ENCODE measurements at regions of chr16 and their contacts with region 1.

Region 1: GRCh38 chr16:84504420-84505248 is at the start of gene MEAK7:
- DNase-seq: peak; percentile 98
- ATAC-seq: peak; percentile 94
- H3K4me3 Mint-ChIP-seq: peak within 1 kb of the TSS; percentile 82
- H3K27ac Mint-ChIP-seq: peak within 1 kb of the TSS; percentile 86
- H3K4me1 Mint-ChIP-seq: peaks cover 56% of the 10 kb centered on the region
- H3K27me3 Mint-ChIP-seq: no peaks in the 10 kb centered on the region
- total RNA-seq, gene MEAK7: 62.3 to 72.4 TPM

Region 2: DNA sequence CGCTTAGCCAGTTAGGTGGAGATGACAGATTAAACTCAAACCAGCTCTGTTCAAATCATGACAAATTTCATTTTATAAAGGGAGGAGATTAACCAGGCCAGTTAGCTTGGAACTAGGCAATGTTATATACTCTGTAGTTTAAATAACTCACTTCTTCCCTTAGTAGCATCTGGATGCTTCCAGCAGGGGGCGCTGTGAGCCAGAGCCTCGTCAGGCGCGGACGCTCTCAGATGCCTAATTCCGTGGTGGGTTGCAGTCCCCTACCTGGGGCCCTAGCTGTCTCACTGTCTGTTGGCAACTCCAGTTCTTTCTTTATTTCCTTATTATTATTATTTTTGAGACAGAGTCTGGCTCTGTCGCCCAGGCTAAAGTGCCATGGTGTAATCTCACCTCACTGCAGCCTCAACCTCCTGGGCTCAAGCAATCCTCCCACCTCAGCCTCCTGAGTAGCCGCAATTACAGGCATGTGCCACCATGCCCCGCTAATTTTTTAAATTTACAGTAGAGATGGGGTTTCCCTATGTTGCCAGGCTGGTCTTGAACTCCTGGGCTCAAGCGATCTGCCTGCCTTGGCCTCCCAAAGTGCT is 227.3 kb before region 1 on chr16:
- CTCF ChIA-PET with region 1: interaction called, 14 read pairs
- POLR2A ChIA-PET with region 1: no interaction called
- DNase-seq: peak; percentile 78
- ATAC-seq: peak; percentile 89
- H3K4me3 Mint-ChIP-seq: no peak overlapping the region
- H3K27ac Mint-ChIP-seq: no peak overlapping the region
- H3K4me1 Mint-ChIP-seq: no peaks in the 10 kb centered on the region
- H3K27me3 Mint-ChIP-seq: peaks cover 4% of the 10 kb centered on the region

Region 3: GRCh38 chr16:84449171-84450140 is 55.2 kb before region 1 on chr16:
- CTCF ChIA-PET with region 1: no interaction called
- POLR2A ChIA-PET with region 1: no interaction called
- DNase-seq: no peak
- ATAC-seq: no peak
- H3K4me3 Mint-ChIP-seq: no peak overlapping the region
- H3K27ac Mint-ChIP-seq: peak overlapping the region; percentile 51
- H3K4me1 Mint-ChIP-seq: no peaks in the 10 kb centered on the region
- H3K27me3 Mint-ChIP-seq: peaks cover 4% of the 10 kb centered on the region

Region 4: DNA sequence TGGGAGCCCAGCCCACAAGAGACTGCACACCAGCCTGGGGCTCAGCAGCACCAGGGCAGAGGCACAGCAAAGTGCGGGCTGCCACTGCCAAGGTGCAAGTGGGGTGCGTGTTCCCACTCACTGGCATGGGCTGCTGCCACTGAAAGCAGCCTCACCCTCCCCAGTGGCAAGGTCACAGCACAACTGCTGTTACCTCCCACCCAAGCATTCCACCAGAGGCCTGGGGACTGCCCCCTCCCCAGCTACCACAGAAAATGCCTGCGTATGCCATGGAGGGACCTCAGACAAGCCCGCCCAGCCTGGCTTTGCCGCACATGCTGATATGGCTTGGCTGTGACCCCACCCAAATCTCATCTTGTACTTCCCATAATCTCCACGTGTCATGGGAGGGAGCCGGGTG is 33.3 kb before region 1 on chr16:
- CTCF ChIA-PET with region 1: no interaction called
- POLR2A ChIA-PET with region 1: no interaction called
- DNase-seq: peak; percentile 13
- ATAC-seq: no peak
- H3K4me3 Mint-ChIP-seq: no peak overlapping the region
- H3K27ac Mint-ChIP-seq: no peak overlapping the region
- H3K4me1 Mint-ChIP-seq: peaks cover 3% of the 10 kb centered on the region
- H3K27me3 Mint-ChIP-seq: no peaks in the 10 kb centered on the region

Region 5: GRCh38 chr16:84518748-84519341 is 14.2 kb after region 1 on chr16:
- CTCF ChIA-PET with region 1: interaction called, 68 read pairs
- POLR2A ChIA-PET with region 1: interaction called, 4 read pairs
- DNase-seq: peak; percentile 94
- ATAC-seq: peak; percentile 60
- H3K4me3 Mint-ChIP-seq: peak overlapping the region; percentile 59
- H3K27ac Mint-ChIP-seq: peak overlapping the region; percentile 92
- H3K4me1 Mint-ChIP-seq: peaks cover 91% of the 10 kb centered on the region
- H3K27me3 Mint-ChIP-seq: no peaks in the 10 kb centered on the region

Region 6: DNA sequence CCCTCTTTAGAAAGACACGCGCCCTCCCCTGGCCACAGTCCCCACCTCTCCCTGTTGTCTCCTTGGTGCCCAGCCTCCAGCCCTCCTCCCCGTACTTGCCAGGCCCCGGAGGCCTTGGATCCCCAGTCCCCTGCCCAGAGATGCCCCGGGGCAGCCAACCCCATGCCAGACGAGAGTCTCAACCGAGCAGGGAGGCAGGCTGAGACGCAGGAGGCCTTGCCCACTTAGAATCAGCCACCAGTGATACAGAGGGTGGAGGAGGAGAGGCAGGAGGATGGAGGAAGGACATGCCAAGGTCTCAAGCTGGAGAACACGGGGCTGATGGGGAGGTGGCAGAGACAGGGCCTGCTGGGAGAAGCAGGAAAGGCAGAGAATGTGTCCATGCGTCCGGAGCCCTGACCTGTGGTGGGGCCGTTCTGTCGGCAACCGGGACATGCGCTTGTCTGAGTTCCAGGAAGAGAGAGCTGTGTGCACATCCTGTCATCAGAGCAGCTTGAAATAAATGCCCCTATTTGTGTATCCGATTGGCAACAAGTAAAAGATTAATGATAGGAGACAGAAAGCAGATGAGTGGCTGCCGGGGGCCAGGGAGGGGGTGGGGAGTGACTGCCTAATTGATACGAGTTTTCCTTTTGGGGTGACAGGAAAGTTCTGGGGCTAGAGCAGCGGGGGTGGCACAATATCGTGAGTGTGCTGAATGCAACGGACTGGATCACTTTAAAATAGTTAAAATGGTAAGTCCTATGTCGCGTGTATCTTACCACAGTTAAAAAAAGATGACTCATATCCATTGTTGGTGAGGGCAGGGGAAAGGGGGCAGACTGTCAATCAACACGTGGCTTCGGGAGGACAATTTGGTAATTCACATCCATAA is 44.6 kb after region 1 on chr16:
- CTCF ChIA-PET with region 1: interaction called, 172 read pairs
- POLR2A ChIA-PET with region 1: interaction called, 9 read pairs
- DNase-seq: peak; percentile 75
- ATAC-seq: peak; percentile 54
- H3K4me3 Mint-ChIP-seq: peak overlapping the region; percentile 86
- H3K27ac Mint-ChIP-seq: peak overlapping the region; percentile 98
- H3K4me1 Mint-ChIP-seq: peaks cover 52% of the 10 kb centered on the region
- H3K27me3 Mint-ChIP-seq: no peaks in the 10 kb centered on the region

Region 7: GRCh38 chr16:84562174-84562815 is 57.7 kb after region 1 on chr16:
- CTCF ChIA-PET with region 1: interaction called, 10 read pairs
- POLR2A ChIA-PET with region 1: no interaction called
- DNase-seq: no peak
- ATAC-seq: no peak
- H3K4me3 Mint-ChIP-seq: no peak overlapping the region
- H3K27ac Mint-ChIP-seq: no peak overlapping the region
- H3K4me1 Mint-ChIP-seq: peaks cover 15% of the 10 kb centered on the region
- H3K27me3 Mint-ChIP-seq: no peaks in the 10 kb centered on the region

Region 8: GRCh38 chr16:84599521-84600202 is 95.0 kb after region 1 on chr16:
- CTCF ChIA-PET with region 1: interaction called, 11 read pairs
- POLR2A ChIA-PET with region 1: interaction called, 3 read pairs
- DNase-seq: peak; percentile 63
- ATAC-seq: peak; percentile 21
- H3K4me3 Mint-ChIP-seq: peak overlapping the region; percentile 73
- H3K27ac Mint-ChIP-seq: peak overlapping the region; percentile 96
- H3K4me1 Mint-ChIP-seq: peaks cover 90% of the 10 kb centered on the region
- H3K27me3 Mint-ChIP-seq: no peaks in the 10 kb centered on the region

Region 9: GRCh38 chr16:84607694-84608093 is 103.1 kb after region 1 on chr16:
- CTCF ChIA-PET with region 1: interaction called, 11 read pairs
- POLR2A ChIA-PET with region 1: no interaction called
- DNase-seq: peak; percentile 56
- ATAC-seq: peak; percentile 52
- H3K4me3 Mint-ChIP-seq: peak overlapping the region; percentile 70
- H3K27ac Mint-ChIP-seq: peak overlapping the region; percentile 92
- H3K4me1 Mint-ChIP-seq: peaks cover 94% of the 10 kb centered on the region
- H3K27me3 Mint-ChIP-seq: no peaks in the 10 kb centered on the region